ENCODE measurements at regions of chr10 and their contacts with region 1.

Region 1: GRCh38 chr10:60335708-60336107 is 54.0 kb downstream of the ANK3 start:
- DNase-seq: no peak
- H3K4me3 ChIP-seq: no peak overlapping the region
- H3K27ac ChIP-seq: no peak overlapping the region
- H3K4me1 ChIP-seq: peaks cover 3 to 8% (median 6%) of the 10 kb centered on the region in 4 experiments; a peak in 4 of 7 replicates
- H3K27me3 ChIP-seq: no peaks in the 10 kb centered on the region
- CTCF ChIP-seq: peak in 1 of 3 experiments; percentile 30; a peak in 1 of 4 replicates
- EP300 ChIP-seq: no peak
- POLR2A ChIP-seq: no peak
- RAD21 ChIP-seq: peak; percentile 44 to 59

Region 2: DNA sequence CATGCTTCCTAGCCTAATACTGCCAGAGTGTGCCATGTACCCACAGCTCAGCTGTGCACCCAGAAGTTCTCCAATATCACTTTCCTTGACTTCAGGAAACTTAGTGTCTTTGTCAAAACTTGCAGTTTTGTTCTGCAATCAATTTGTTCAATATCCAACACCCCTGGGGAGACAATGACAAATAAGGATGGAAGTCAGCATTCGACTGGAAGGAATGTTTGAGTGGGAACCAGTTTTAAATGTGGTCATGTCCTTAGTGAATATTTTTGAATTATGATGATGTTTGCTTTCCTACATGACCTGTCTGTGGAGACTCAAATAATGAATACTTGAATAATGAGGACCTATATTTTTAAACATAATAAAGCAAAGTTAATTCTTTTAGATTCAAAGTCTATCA is 58.1 kb before region 1 on chr10:
- CTCF ChIA-PET with region 1: no interaction called
- POLR2A ChIA-PET with region 1: no interaction called
- DNase-seq: no peak
- H3K4me3 ChIP-seq: no peak overlapping the region
- H3K27ac ChIP-seq: no peak overlapping the region
- H3K4me1 ChIP-seq: peaks cover 0 to 7% (median 2%) of the 10 kb centered on the region in 4 experiments; a peak in 1 of 7 replicates
- H3K27me3 ChIP-seq: no peaks in the 10 kb centered on the region
- CTCF ChIP-seq: no peak
- EP300 ChIP-seq: no peak
- POLR2A ChIP-seq: no peak
- RAD21 ChIP-seq: no peak

Region 3: GRCh38 chr10:60350400-60350799 is 14.7 kb after region 1 on chr10:
- CTCF ChIA-PET with region 1: interaction called, 18 read pairs
- POLR2A ChIA-PET with region 1: no interaction called
- DNase-seq: no peak
- H3K4me3 ChIP-seq: no peak overlapping the region
- H3K27ac ChIP-seq: no peak overlapping the region
- H3K4me1 ChIP-seq: peaks cover 0 to 5% (median 3%) of the 10 kb centered on the region in 4 experiments; a peak in 4 of 7 replicates
- H3K27me3 ChIP-seq: no peaks in the 10 kb centered on the region
- CTCF ChIP-seq: no peak
- EP300 ChIP-seq: no peak
- POLR2A ChIP-seq: no peak
- RAD21 ChIP-seq: no peak